ENCODE measurements at regions of chr22 and their contacts with region 1.

Region 1: DNA sequence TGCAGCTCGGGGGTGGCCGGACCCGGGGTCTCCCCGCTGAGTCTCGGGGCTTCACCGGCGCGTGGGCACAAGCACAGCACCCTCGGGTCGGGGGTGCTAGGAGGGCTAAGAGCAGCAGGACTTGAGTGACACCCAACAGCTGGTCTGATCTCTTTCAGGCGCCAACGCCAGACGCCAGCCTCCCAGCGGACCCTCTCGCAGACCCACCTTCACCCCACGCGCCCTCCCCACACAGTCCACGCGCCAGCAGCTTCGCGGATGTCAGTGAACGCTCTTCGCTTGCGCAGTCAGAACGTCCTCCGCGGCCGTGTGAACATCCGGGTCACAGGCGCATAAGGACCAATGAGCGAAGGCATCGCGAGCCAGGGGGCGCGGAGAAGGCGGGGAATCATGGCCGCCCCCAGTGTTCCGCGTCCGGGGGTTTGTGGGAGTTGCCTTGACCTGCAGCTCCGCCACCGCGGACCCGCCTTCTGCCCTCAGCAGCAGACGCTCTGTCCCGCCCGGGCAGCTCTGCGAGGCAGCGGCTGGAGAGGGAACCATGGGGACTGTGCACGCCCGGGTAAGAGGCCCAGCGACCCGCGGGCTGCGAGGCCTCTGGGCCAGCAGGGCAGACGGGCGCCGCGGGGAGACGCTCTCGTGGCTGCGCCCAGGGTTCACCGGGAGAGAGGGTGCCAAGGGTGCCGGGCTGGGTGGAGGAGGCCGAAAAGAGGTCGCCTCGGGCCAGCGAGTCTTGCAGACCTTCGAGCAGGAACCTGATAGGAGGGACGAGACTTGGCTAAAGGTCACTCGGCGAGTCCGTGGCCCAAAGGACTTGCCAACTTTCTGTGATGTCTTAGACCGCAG is at the start of gene SAMM50:
- DNase-seq: peak; percentile 91
- H3K4me3 Mint-ChIP-seq: peak within 1 kb of the TSS; percentile 97
- H3K27ac Mint-ChIP-seq: peak within 1 kb of the TSS; percentile 93
- H3K4me1 Mint-ChIP-seq: peaks cover 32% of the 10 kb centered on the region
- H3K27me3 Mint-ChIP-seq: no peaks in the 10 kb centered on the region
- total RNA-seq, gene SAMM50: 60.6 and 63.0 TPM in 2 replicates

Region 2: GRCh38 chr22:43812149-43812842 is 143.0 kb before region 1 on chr22 and contains the start of gene EFCAB6:
- intact Hi-C with region 1: loop called (anchors 1 kb)
- DNase-seq: peak; percentile 86
- H3K4me3 Mint-ChIP-seq: peak within 1 kb of the TSS; percentile 94
- H3K27ac Mint-ChIP-seq: peak within 1 kb of the TSS; percentile 88
- H3K4me1 Mint-ChIP-seq: peaks cover 39% of the 10 kb centered on the region
- H3K27me3 Mint-ChIP-seq: peaks cover 5% of the 10 kb centered on the region
- total RNA-seq, gene EFCAB6: 0.17 TPM in 1 of 2 replicates, not detected in the other

Region 3: GRCh38 chr22:43828998-43829782 is 126.1 kb before region 1 on chr22:
- intact Hi-C with region 1: no loop called
- DNase-seq: no peak
- H3K4me3 Mint-ChIP-seq: no peak overlapping the region
- H3K27ac Mint-ChIP-seq: no peak overlapping the region
- H3K4me1 Mint-ChIP-seq: no peaks in the 10 kb centered on the region
- H3K27me3 Mint-ChIP-seq: no peaks in the 10 kb centered on the region

Region 4: DNA sequence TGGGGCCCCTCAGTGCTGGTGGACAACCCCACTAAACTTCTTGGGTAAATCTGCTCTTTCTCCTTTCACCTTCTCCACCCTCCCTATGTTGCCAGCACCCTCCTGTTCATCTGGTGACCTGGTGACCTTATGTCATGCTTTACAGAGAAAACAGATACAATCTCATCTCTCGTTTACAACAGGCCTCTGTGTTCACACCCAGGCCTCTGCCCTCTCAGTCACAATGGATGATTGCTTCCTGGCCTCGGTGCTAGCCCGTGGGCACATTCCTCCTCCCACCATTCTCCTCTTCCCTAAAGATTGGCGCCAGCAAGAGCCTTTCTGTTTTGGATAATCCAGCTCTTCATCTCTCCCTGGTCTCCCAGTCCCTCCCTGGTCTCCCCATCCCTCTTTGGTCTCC is 43.9 kb before region 1 on chr22:
- intact Hi-C with region 1: no loop called
- DNase-seq: no peak
- H3K4me3 Mint-ChIP-seq: no peak overlapping the region
- H3K27ac Mint-ChIP-seq: no peak overlapping the region
- H3K4me1 Mint-ChIP-seq: no peaks in the 10 kb centered on the region
- H3K27me3 Mint-ChIP-seq: peaks cover 10% of the 10 kb centered on the region

Region 5: GRCh38 chr22:43923631-43924464 is 31.4 kb before region 1 on chr22 and contains the start of gene PNPLA3:
- intact Hi-C with region 1: loop called (anchors 1 kb)
- DNase-seq: peak; percentile 79
- H3K4me3 Mint-ChIP-seq: peak within 1 kb of the TSS; percentile 85
- H3K27ac Mint-ChIP-seq: peak within 1 kb of the TSS; percentile 85
- H3K4me1 Mint-ChIP-seq: peaks cover 6% of the 10 kb centered on the region
- H3K27me3 Mint-ChIP-seq: peaks cover 15% of the 10 kb centered on the region
- total RNA-seq, gene PNPLA3: 0.86 and 1.6 TPM in 2 replicates

Region 6: GRCh38 chr22:44180706-44181032 is 225.4 kb after region 1 on chr22 and contains the start of gene PARVG:
- intact Hi-C with region 1: loop called (anchors 2 kb)
- DNase-seq: peak; percentile 33
- H3K4me3 Mint-ChIP-seq: peak within 1 kb of the TSS; percentile 81
- H3K27ac Mint-ChIP-seq: peak within 1 kb of the TSS; percentile 97
- H3K4me1 Mint-ChIP-seq: peaks cover 19% of the 10 kb centered on the region
- H3K27me3 Mint-ChIP-seq: peaks cover 9% of the 10 kb centered on the region
- total RNA-seq, gene PARVG: 50.6 and 52.8 TPM in 2 replicates